HEK293T (cell line): ENCODE measurements at regions of chr11 and their contacts with region 1.

Region 1: DNA sequence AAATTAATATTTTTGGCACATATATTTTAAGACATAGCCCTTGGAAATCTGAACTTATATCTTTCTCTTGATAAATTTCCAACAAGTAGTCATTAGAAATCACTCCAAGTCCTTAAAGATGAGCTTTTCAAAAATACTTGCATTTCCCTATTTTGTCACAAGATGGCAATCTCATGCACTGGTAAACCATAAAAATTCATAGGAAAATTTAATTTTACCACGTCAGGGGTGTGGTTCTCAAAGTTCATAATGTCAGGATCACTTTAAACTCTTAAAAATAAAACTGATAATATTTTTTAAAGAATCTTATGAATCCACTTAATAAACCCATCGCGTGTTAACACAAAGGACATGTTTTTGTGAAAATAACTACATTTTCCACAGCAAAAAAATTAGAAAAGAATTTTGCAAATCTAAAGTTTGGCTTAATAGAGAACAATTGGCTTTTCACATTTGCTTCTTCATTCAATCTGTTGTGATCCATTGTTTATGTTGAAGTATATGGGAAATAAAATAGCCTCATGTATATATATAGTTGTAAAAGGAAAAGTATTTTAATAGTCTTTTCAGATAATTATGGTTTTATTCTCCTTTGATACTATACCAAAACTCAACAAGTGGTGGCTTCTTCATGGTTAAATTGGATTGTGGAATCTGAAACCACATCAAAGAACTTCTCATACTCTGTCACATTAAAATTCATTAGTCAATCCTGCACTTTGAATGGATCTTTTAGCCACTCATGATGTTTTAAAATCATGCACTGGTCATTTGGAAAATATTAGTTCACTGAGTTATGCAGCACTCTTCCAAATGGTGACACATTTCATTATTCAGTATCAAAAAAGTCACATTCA is 169.1 kb downstream of the CADM1 start:
- DNase-seq: no peak

Region 2: DNA sequence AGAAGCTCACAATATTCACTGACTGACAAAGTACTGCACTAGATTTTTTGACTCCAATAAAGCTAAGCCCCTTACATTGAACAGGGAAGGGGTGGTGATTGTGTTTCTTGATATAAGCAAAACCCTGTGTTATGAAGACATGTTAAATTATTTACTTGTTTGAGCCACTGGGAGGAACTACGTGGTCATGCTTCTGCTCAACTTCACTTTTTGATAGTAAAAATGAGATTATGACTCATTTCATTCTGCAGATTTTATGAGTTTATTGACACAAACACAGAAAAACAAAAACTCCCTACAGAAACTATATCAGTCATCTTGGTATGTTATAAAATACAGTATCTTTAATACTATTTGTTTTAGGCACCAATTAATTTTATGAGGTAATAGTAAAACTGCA is 44.4 kb after region 1 on chr11:
- CTCF ChIA-PET with region 1: no interaction called
- POLR2A ChIA-PET with region 1: no interaction called
- DNase-seq: no peak

Region 3: DNA sequence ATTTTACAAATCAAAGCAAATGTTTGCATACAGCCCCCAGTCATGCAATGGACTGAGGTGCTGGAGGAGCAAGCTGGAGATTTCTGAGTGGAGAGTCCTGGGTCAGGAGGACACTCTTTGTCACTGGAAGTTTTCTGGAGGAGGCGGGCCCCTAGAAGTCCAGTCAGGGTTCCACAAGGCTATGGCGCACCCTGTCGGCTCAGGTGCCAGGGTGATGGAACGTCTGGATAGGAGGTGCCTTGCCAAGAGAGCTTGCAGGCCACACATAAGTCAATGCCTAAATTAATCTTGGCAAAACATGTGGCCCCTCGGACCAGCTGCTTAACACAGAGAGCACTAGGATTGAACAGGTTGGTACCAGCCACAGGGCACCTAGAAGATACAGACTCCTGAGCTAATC is 343.8 kb after region 1 on chr11:
- CTCF ChIA-PET with region 1: interaction called, 14 read pairs
- POLR2A ChIA-PET with region 1: no interaction called
- DNase-seq: peak; percentile 62